Naive thymus-derived CD4-positive, alpha-beta T cell (primary cell): ENCODE measurements at regions of chr20 and their contacts with region 1.

Region 1: GRCh38 chr20:38165089-38165989 is at the start of gene TGM2:
- DNase-seq: peak in 4 of 9 donors; percentile 4 to 73 (median 24)
- ATAC-seq: peak; percentile 84
- H3K4me3 ChIP-seq: no peak within 1 kb of the TSS
- H3K4me3 Mint-ChIP-seq: peak within 1 kb of the TSS in 5 of 10 donors; percentile 3 to 64 (median 10)
- H3K27ac ChIP-seq: no peak within 1 kb of the TSS
- H3K27ac Mint-ChIP-seq: peak within 1 kb of the TSS in 3 of 9 donors; percentile 14 to 59 (median 50)
- H3K4me1 ChIP-seq: no peaks in the 10 kb centered on the region
- H3K4me1 Mint-ChIP-seq: peaks cover 0 to 32% (median 6%) of the 10 kb centered on the region in 7 donors
- H3K27me3 ChIP-seq: no peaks in the 10 kb centered on the region
- H3K27me3 Mint-ChIP-seq: peaks cover 17 to 29% (median 24%) of the 10 kb centered on the region in 5 donors
- total RNA-seq, gene TGM2: 0.11 to 0.94 (median 0.19) TPM

Region 2: GRCh38 chr20:38057351-38057972 is 107.9 kb before region 1 on chr20:
- CTCF ChIA-PET with region 1: no interaction called
- POLR2A ChIA-PET with region 1: no interaction called
- intact Hi-C with region 1: loop called in 1 of 2 experiments (anchors 1 kb)
- DNase-seq: peak; percentile 33 to 69 (median 60)
- ATAC-seq: peak; percentile 98
- H3K4me3 ChIP-seq: no peak overlapping the region
- H3K4me3 Mint-ChIP-seq: peak overlapping the region in 1 of 10 donors; percentile 52
- H3K27ac ChIP-seq: no peak overlapping the region
- H3K27ac Mint-ChIP-seq: peak overlapping the region in 8 of 9 donors; percentile 14 to 82 (median 30)
- H3K4me1 ChIP-seq: no peaks in the 10 kb centered on the region
- H3K4me1 Mint-ChIP-seq: peaks cover 5 to 37% (median 31%) of the 10 kb centered on the region in 7 donors
- H3K27me3 ChIP-seq: no peaks in the 10 kb centered on the region
- H3K27me3 Mint-ChIP-seq: no peaks in the 10 kb centered on the region

Region 3: GRCh38 chr20:38073307-38074071 is 91.8 kb before region 1 on chr20:
- CTCF ChIA-PET with region 1: no interaction called
- POLR2A ChIA-PET with region 1: no interaction called
- intact Hi-C with region 1: loop called in 1 of 2 experiments (anchors 1 kb)
- DNase-seq: peak in 6 of 9 donors; percentile 7 to 39 (median 12)
- ATAC-seq: peak; percentile 78
- H3K4me3 ChIP-seq: no peak overlapping the region
- H3K4me3 Mint-ChIP-seq: no peak overlapping the region
- H3K27ac ChIP-seq: no peak overlapping the region
- H3K27ac Mint-ChIP-seq: peak overlapping the region in 6 of 9 donors; percentile 15 to 73 (median 44)
- H3K4me1 ChIP-seq: no peaks in the 10 kb centered on the region
- H3K4me1 Mint-ChIP-seq: peaks cover 9 to 34% (median 18%) of the 10 kb centered on the region in 7 donors
- H3K27me3 ChIP-seq: no peaks in the 10 kb centered on the region
- H3K27me3 Mint-ChIP-seq: no peaks in the 10 kb centered on the region

Region 4: DNA sequence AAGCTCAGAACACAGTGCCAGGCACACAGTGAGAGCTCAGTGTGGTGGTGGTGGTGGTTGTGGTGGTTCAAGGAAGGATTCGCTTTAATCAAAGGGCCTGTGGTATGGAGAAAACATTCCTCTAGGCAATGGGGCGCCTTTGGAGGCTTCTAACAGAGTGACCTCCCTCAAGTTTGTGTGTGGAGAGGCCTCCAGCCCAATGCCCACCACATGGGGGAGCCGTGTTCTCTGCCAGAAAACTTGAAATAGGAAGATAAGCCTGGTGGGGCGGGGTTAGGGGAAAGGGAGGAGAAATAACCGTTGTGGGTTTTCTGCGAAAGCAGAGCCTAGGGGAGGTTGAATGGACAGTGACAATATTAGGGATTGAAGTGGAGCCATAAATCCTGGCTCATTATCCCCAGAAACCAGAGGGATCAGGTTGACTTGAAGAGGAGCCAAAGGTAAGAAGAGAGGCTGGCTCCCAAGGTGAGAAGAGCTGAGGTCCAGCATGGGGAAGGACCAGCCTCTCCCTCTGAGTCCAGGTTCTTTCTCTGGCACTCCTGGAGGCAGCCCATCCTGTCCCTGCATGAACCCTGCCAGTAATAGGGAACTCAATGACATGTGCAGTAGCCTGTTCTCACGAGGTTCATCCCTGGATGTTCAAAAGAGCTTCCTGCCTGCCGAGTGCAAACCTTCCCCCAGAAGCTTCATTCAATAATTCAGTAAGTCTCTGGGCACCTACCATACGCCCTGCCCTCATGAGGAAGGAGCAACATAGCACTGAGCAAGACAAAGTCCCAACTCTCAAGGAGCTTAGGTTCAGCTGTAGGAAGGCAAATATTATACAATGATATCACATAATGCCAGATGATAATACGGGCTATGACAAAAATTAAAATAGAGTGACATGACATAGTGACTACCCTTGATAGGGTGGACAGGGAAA is 51.7 kb before region 1 on chr20:
- CTCF ChIA-PET with region 1: no interaction called
- POLR2A ChIA-PET with region 1: no interaction called
- intact Hi-C with region 1: loop called in 1 of 2 experiments (anchors 2 kb)
- DNase-seq: no peak
- ATAC-seq: peak; percentile 61
- H3K4me3 ChIP-seq: no peak overlapping the region
- H3K4me3 Mint-ChIP-seq: no peak overlapping the region
- H3K27ac ChIP-seq: no peak overlapping the region
- H3K27ac Mint-ChIP-seq: peak overlapping the region in 1 of 9 donors; percentile 21
- H3K4me1 ChIP-seq: no peaks in the 10 kb centered on the region
- H3K4me1 Mint-ChIP-seq: peaks cover 0 to 7% (median 0%) of the 10 kb centered on the region in 7 donors
- H3K27me3 ChIP-seq: no peaks in the 10 kb centered on the region
- H3K27me3 Mint-ChIP-seq: peaks cover 0 to 22% (median 0%) of the 10 kb centered on the region in 5 donors

Region 5: DNA sequence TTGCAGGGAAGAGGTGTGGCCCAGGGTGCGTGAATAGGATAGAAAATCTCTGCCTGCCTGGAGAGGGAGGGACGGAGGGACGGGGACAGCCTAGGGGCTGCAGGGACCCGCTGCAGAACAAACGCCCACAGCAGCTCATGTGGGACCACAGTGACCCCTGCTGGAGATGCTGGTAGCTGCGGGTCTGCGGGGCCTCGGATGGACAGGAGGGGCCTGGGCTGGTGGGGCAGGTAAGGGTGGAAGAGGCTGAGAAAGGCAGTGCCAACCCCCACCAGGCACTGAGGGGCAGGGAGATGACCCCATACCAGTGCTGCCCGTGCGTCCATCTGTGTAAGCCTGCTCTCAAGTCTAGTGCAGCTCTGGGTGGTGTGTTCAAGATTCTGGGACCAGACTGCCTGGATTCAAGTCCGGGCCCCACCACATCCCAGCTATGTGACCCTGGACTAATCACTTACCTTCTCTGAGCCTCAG is 55.8 kb after region 1 on chr20:
- CTCF ChIA-PET with region 1: no interaction called
- POLR2A ChIA-PET with region 1: no interaction called
- intact Hi-C with region 1: no loop called
- DNase-seq: peak in 8 of 9 donors; percentile 16 to 77 (median 50)
- ATAC-seq: peak; percentile 81
- H3K4me3 ChIP-seq: no peak overlapping the region
- H3K4me3 Mint-ChIP-seq: peak overlapping the region in 2 of 10 donors; percentile 22 to 51
- H3K27ac ChIP-seq: no peak overlapping the region
- H3K27ac Mint-ChIP-seq: no peak overlapping the region
- H3K4me1 ChIP-seq: no peaks in the 10 kb centered on the region
- H3K4me1 Mint-ChIP-seq: peaks cover 0 to 7% (median 0%) of the 10 kb centered on the region in 7 donors
- H3K27me3 ChIP-seq: no peaks in the 10 kb centered on the region
- H3K27me3 Mint-ChIP-seq: peaks cover 0 to 12% (median 3%) of the 10 kb centered on the region in 5 donors